Dorsolateral prefrontal cortex (tissue), 120 donors: ENCODE measurements at regions of chr17 and their contacts with region 1.

Region 1: GRCh38 chr17:32627239-32627996 is 140.6 kb downstream of the CDK5R1 start:
- DNase-seq: peak; percentile 48 to 91 (median 73)
- H3K4me3 ChIP-seq: peak overlapping the region in 58 of 59 donors; percentile 5 to 64 (median 40)
- H3K27ac ChIP-seq: peak overlapping the region in 58 of 59 donors; percentile 22 to 95 (median 80)
- H3K27me3 ChIP-seq: no peaks in the 10 kb centered on the region
- CTCF ChIP-seq: peak in 19 of 56 donors; percentile 3 to 40 (median 15)

Region 2: GRCh38 chr17:32495359-32496231 is 131.8 kb before region 1 on chr17:
- intact Hi-C with region 1: loop called (anchors 5 to 10 kb)
- DNase-seq: peak in 4 of 10 donors; percentile 46 to 73 (median 54)
- H3K4me3 ChIP-seq: peak overlapping the region in 42 of 59 donors; percentile 2 to 52 (median 30)
- H3K27ac ChIP-seq: peak overlapping the region in 56 of 59 donors; percentile 4 to 99 (median 81)
- H3K27me3 ChIP-seq: no peaks in the 10 kb centered on the region
- CTCF ChIP-seq: no peak

Region 3: DNA sequence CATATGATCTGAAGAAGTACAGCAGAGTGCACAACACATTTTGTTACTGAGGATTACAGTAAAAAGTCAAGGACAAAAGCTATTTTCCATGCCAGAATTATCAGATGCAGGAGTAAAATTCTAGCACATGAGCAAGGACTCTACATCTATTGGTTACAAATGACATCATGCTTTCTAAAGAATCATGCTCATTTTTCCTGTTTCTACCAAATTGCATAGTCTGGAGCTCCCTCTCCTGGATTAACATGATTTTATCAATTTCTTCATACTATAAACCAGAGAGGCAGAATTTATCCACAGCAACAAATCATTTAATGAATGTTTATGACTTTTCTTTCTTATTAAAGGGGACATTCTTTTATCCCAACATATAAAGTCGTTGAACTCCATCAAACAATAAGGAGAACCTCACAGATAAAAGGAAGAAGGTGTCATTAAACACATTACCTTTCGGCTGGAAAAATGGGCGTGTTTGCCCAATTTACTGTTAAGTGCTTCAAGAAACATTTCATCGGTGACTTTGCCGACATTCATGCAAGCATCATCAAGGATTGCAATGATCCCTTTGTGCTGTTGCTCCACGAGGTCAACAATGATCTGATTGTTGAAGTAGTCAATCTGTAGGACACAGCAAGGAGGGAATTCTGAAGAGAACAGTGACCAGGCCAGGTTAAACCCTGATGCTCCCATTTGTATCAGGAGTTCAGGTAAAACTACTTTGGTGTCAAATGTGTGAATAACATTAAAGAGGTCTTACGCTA is 127.8 kb after region 1 on chr17:
- intact Hi-C with region 1: no loop called
- DNase-seq: peak in 2 of 10 donors; percentile 23 to 35
- H3K4me3 ChIP-seq: peak overlapping the region in 6 of 59 donors; percentile 4 to 31 (median 14)
- H3K27ac ChIP-seq: peak overlapping the region; percentile 44 to 95 (median 85)
- H3K27me3 ChIP-seq: no peaks in the 10 kb centered on the region
- CTCF ChIP-seq: peak; percentile 58 to 94 (median 80)

Region 4: DNA sequence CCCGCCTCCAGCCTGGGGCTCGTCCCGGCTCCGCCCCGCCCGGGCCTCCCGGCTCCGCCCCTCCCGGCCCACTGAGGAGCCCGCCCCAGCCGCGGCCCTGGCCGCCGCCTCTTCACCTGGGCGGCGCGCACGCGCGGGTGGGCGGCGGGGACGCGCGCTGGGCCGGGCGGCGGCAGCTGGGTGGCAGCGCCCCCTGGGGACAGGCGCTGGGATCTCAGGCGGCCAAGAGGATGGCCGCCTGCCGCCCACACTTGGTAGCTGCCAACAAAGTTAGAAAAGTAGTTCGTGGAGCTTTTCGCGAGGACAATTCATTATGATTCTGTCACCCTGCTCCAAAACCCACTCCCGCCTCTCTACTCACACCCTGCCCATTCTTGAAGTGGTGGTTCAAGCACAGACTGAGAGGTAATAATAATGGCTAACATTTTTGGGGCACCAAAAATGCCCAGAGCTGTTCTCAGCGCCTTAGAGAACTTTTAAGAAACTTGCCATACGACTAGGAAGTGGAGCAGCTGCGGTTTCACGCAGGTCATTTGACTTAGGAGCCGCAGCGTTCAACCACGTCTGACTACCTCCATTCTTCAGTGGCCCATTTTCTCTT is 249.8 kb after region 1 on chr17:
- intact Hi-C with region 1: no loop called
- DNase-seq: peak; percentile 61 to 92 (median 84)
- H3K4me3 ChIP-seq: peak overlapping the region in 58 of 59 donors; percentile 51 to 91 (median 82)
- H3K27ac ChIP-seq: peak overlapping the region in 52 of 59 donors; percentile 29 to 97 (median 87)
- H3K27me3 ChIP-seq: no peaks in the 10 kb centered on the region
- CTCF ChIP-seq: peak; percentile 34 to 95 (median 82)